MCF 10A (cell line): ENCODE measurements at regions of chr11 and their contacts with region 1.

Region 1: GRCh38 chr11:20013346-20014066 is 146.8 kb downstream of the DBX1 start:
- DNase-seq: peak; percentile 67
- H3K4me3 Mint-ChIP-seq: no peak overlapping the region
- H3K27ac Mint-ChIP-seq: no peak overlapping the region
- H3K4me1 Mint-ChIP-seq: peaks cover 43% of the 10 kb centered on the region
- H3K27me3 Mint-ChIP-seq: no peaks in the 10 kb centered on the region
- CTCF ChIP-seq: no peak

Region 2: GRCh38 chr11:18754308-18754707 is 1259.2 kb before region 1 on chr11:
- CTCF ChIA-PET with region 1: no interaction called
- POLR2A ChIA-PET with region 1: no interaction called
- intact Hi-C with region 1: no loop called
- DNase-seq: no peak
- H3K4me3 Mint-ChIP-seq: no peak overlapping the region
- H3K27ac Mint-ChIP-seq: no peak overlapping the region
- H3K4me1 Mint-ChIP-seq: peaks cover 6% of the 10 kb centered on the region
- H3K27me3 Mint-ChIP-seq: peaks cover 24% of the 10 kb centered on the region
- CTCF ChIP-seq: no peak

Region 3: GRCh38 chr11:19978668-19979518 is 34.6 kb before region 1 on chr11:
- CTCF ChIA-PET with region 1: interaction called, 5 read pairs
- POLR2A ChIA-PET with region 1: interaction called, 18 read pairs
- intact Hi-C with region 1: loop called (anchors 2 kb)
- DNase-seq: peak; percentile 91
- H3K4me3 Mint-ChIP-seq: peak overlapping the region; percentile 37
- H3K27ac Mint-ChIP-seq: peak overlapping the region; percentile 96
- H3K4me1 Mint-ChIP-seq: peaks cover 41% of the 10 kb centered on the region
- H3K27me3 Mint-ChIP-seq: no peaks in the 10 kb centered on the region
- CTCF ChIP-seq: no peak

Region 4: GRCh38 chr11:19988598-19988997 is 24.9 kb before region 1 on chr11:
- CTCF ChIA-PET with region 1: interaction called, 5 read pairs
- POLR2A ChIA-PET with region 1: interaction called, 29 read pairs
- intact Hi-C with region 1: no loop called
- DNase-seq: peak; percentile 53
- H3K4me3 Mint-ChIP-seq: no peak overlapping the region
- H3K27ac Mint-ChIP-seq: peak overlapping the region; percentile 98
- H3K4me1 Mint-ChIP-seq: peaks cover 41% of the 10 kb centered on the region
- H3K27me3 Mint-ChIP-seq: no peaks in the 10 kb centered on the region
- CTCF ChIP-seq: no peak

Region 5: GRCh38 chr11:19995131-19995530 is 18.4 kb before region 1 on chr11:
- CTCF ChIA-PET with region 1: interaction called, 9 read pairs
- POLR2A ChIA-PET with region 1: interaction called, 165 read pairs
- intact Hi-C with region 1: no loop called
- DNase-seq: peak; percentile 95
- H3K4me3 Mint-ChIP-seq: peak overlapping the region; percentile 73
- H3K27ac Mint-ChIP-seq: peak overlapping the region; percentile 99
- H3K4me1 Mint-ChIP-seq: peaks cover 36% of the 10 kb centered on the region
- H3K27me3 Mint-ChIP-seq: no peaks in the 10 kb centered on the region
- CTCF ChIP-seq: no peak

Region 6: GRCh38 chr11:20002312-20003216 is 10.9 kb before region 1 on chr11:
- CTCF ChIA-PET with region 1: interaction called, 7 read pairs
- POLR2A ChIA-PET with region 1: interaction called, 165 read pairs
- intact Hi-C with region 1: no loop called
- DNase-seq: no peak
- H3K4me3 Mint-ChIP-seq: no peak overlapping the region
- H3K27ac Mint-ChIP-seq: peak overlapping the region; percentile 96
- H3K4me1 Mint-ChIP-seq: peaks cover 47% of the 10 kb centered on the region
- H3K27me3 Mint-ChIP-seq: no peaks in the 10 kb centered on the region
- CTCF ChIP-seq: no peak

Region 7: DNA sequence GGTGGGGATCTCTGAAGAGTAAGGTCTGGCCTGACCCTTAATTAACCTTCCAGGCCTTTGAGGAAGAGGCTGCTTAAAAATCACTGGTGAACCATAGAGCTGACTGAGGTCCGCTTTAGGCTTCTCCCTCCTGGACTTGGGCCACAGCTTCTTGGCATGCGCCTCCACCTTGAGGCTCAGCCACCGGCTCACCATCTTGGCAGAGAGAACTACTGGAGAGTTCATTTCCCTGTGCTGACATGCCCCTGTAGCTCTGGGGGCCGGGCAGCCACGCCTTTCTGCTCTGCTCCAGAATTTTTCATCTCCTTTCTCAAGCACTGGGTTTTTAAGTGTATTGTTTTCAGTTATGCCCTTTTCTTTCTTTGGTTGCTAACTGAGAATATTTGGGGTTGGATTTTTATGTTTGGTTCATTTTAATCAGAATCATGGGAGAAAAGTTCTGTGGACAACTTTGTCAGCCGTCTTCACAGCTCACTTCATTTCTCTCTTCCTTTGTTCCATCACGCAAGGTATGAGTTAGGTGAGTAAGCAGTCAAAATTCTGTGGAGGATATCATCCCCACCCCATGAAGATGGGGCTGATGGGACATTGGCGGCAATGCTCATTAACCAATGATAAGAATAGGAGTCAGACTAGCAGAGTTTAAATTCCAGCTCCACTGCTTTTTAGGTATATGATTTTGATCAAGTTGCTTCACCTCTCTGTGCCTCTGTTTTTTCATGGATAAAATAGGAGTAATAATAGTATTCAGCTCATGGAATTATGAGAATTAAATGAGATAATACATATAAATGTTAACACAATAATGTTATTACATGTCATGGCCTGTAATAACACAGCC is 42.8 kb after region 1 on chr11:
- CTCF ChIA-PET with region 1: interaction called, 4 read pairs
- POLR2A ChIA-PET with region 1: interaction called, 270 read pairs
- intact Hi-C with region 1: no loop called
- DNase-seq: peak; percentile 92
- H3K4me3 Mint-ChIP-seq: peak overlapping the region; percentile 26
- H3K27ac Mint-ChIP-seq: peak overlapping the region; percentile 90
- H3K4me1 Mint-ChIP-seq: peaks cover 67% of the 10 kb centered on the region
- H3K27me3 Mint-ChIP-seq: no peaks in the 10 kb centered on the region
- CTCF ChIP-seq: no peak

Region 8: DNA sequence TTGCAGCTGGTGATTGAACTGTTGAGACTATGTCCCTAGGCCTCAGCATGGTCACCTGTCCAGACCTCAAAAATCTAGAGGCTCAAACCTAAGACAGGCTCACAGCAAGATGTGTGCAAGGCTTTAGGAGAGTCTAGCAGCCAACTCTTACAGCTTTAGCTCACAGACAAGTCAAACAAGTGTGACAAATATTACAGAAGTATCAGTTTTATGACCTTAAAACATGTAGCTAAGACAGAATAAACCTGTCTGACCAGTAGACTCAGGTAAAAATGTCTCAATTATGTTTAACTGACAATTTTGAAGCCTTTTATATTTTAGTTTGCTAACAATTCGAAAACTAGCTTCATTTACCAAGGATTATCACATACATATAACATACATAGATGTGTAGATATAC is 270.0 kb after region 1 on chr11:
- CTCF ChIA-PET with region 1: no interaction called
- POLR2A ChIA-PET with region 1: no interaction called
- intact Hi-C with region 1: no loop called
- DNase-seq: no peak
- H3K4me3 Mint-ChIP-seq: no peak overlapping the region
- H3K27ac Mint-ChIP-seq: no peak overlapping the region
- H3K4me1 Mint-ChIP-seq: peaks cover 6% of the 10 kb centered on the region
- H3K27me3 Mint-ChIP-seq: peaks cover 75% of the 10 kb centered on the region
- CTCF ChIP-seq: no peak